Natural killer cell (primary cell): ENCODE measurements at regions of chr6 and their contacts with region 1.

Region 1: DNA sequence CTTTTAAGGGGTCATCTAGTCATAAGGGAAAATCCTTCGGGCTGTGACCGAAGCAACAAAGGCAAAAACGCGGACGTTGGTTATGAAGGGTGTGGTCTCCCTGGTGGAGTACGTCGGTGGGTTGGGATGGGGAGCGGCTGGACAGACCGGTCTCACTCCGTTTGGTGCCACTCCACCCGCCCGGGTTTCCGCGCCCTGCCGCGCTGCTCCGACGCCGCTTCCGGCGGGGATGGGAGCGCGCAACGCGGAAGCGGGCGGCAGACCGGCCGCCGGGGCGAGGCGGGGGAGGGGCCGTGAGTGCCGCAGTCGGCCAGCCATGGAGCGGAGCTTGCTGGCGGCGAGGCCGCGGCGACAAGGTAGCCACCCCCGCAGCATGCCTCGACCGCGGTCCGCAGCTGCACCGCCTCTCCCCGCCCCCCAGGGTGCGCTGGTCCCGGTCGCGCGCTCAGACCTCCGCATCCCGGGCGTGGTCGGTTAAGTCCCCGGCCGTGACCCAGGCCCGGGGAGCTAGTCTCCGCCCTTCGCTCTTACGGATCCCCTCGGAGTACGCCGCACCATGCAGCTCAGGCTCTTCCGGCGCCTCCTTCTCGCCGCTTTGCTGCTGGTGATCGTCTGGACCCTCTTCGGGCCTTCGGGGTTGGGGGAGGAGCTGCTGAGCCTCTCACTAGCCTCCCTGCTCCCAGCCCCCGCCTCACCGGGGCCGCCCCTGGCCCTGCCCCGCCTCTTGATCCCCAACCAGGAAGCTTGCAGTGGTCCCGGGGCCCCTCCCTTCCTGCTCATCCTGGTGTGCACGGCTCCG is at the start of gene B3GALT4:
- DNase-seq: peak; percentile 68 to 86
- ATAC-seq: peak; percentile 73 to 83 (median 76)
- H3K4me3 ChIP-seq: peak within 1 kb of the TSS; percentile 82
- H3K4me3 Mint-ChIP-seq: peak within 1 kb of the TSS; percentile 94
- H3K27ac ChIP-seq: peak within 1 kb of the TSS; percentile 90
- H3K27ac Mint-ChIP-seq: peak within 1 kb of the TSS; percentile 90 to 91
- H3K4me1 ChIP-seq: peaks cover 63% of the 10 kb centered on the region
- H3K4me1 Mint-ChIP-seq: peaks cover 48 to 71% of the 10 kb centered on the region in 2 donors
- H3K27me3 ChIP-seq: no peaks in the 10 kb centered on the region
- H3K27me3 Mint-ChIP-seq: no peaks in the 10 kb centered on the region
- CTCF ChIP-seq: peak; percentile 61
- total RNA-seq, gene B3GALT4: 22.7 to 24.1 (median 23.1) TPM

Region 2: DNA sequence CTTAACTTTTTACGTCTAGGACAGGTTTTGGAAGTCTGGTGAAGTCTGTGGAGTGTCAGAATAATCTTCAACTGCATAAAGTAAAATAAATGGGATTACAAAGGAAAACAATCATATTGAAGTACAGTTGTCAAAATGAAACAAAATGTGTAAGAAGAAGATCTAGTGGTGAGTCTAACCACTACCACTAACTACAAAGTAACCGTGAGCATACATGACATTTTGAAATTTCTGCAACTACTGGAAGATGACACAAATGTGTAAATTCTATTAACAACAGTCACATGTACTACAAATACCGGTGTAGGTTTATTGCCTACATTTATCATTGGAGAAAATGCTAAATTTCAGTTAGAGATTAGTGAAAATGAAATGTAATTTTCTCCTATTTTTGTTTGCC is 35.1 kb before region 1 on chr6:
- intact Hi-C with region 1: no loop called
- DNase-seq: peak in 1 of 2 donors; percentile 19
- ATAC-seq: no peak
- H3K4me3 ChIP-seq: no peak overlapping the region
- H3K4me3 Mint-ChIP-seq: no peak overlapping the region
- H3K27ac ChIP-seq: no peak overlapping the region
- H3K27ac Mint-ChIP-seq: no peak overlapping the region
- H3K4me1 ChIP-seq: no peaks in the 10 kb centered on the region
- H3K4me1 Mint-ChIP-seq: no peaks in the 10 kb centered on the region
- H3K27me3 ChIP-seq: no peaks in the 10 kb centered on the region
- H3K27me3 Mint-ChIP-seq: peaks cover 20 to 28% of the 10 kb centered on the region in 2 donors
- CTCF ChIP-seq: no peak

Region 3: DNA sequence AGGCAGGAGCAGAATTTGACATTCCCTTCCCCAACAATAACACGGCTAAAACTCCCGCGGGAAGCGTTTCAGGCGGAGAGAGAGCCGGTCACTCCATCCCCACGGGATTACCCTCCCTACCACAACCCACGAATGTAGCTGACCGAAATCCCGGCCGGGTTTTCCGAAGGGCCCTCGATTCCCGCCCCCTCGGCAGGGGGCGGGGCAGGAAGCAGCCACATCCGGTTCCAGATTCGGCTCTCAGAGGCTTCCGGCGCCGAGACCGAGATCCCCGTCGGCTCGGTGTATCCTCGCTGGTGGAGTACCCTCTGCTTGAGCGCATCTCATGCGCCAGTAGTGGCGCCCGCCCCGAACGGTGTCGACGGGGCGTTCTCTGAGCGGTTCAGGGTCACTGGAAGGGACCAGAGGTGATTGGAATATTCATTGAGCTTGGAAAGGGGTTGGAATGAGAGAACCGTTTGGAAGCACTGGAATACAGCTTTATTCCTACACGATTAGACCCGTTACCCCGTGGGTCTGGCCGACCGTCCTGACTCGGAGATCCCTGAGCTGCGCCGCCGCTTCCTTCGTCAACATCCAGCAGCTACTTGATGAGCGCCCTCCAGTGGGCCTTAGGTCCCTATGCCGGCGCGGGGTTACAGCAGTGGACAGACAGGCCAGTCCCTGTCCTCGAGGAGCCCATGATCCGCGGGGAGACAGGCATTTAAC is 22.3 kb after region 1 on chr6:
- intact Hi-C with region 1: loop called (anchors 1 kb)
- DNase-seq: peak; percentile 91 to 97
- ATAC-seq: peak; percentile 74 to 88 (median 79)
- H3K4me3 ChIP-seq: peak overlapping the region; percentile 81
- H3K4me3 Mint-ChIP-seq: peak overlapping the region; percentile 99
- H3K27ac ChIP-seq: peak overlapping the region; percentile 88
- H3K27ac Mint-ChIP-seq: peak overlapping the region; percentile 99
- H3K4me1 ChIP-seq: peaks cover 34% of the 10 kb centered on the region
- H3K4me1 Mint-ChIP-seq: peaks cover 36 to 63% of the 10 kb centered on the region in 2 donors
- H3K27me3 ChIP-seq: no peaks in the 10 kb centered on the region
- H3K27me3 Mint-ChIP-seq: no peaks in the 10 kb centered on the region
- CTCF ChIP-seq: peak; percentile 64